ENCODE measurements at regions of chr4 and their contacts with region 1.

Region 1: GRCh38 chr4:16431866-16432265 is 205.6 kb upstream of the TAPT1 start:
- DNase-seq: no peak
- ATAC-seq: no peak
- H3K4me3 ChIP-seq: no peak overlapping the region
- H3K27ac ChIP-seq: no peak overlapping the region
- H3K4me1 ChIP-seq: no peaks in the 10 kb centered on the region
- H3K27me3 ChIP-seq: no peaks in the 10 kb centered on the region
- CTCF ChIP-seq: no peak

Region 2: DNA sequence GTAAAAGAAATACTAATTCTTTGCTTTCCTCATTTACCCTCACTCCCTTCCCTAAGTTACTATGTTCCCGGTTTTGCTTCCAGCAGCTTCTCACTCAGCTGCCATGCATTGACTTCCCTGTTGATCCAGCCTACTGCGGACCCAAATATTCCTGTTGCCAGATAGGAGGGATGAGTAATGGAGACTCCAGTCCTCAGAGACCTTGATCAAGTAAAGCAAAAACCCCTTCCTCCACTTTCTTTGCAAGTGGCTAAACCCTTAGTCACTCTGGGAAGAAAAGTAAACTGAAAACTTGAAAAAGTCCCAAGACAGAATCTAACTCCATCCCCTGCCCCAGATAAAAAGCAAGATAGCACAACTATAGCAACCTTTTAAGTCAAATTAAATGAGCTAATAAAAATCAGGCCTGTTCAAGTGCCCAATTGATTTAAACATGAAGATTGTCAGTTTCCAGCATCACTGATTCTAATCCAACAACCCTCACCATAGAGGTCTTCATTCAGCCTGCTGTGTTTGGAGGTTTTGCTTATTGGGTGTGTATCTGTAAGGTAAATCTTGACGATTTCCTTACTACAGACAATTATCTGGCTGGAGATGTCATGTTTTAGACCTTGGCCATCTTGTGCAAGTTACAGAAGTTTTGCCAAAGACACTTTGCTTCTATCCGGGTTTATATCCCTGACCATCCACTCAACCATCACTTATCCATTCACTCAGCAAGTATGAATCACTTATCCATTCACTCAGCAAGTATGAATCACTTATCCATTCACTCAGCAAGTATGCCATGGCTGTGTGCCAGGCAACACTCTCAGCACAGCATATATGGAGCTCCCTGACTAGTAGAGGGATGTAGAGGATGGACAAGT is 510.9 kb before region 1 on chr4:
- intact Hi-C with region 1: no loop called
- DNase-seq: peak in 1 of 2 donors; percentile 12
- ATAC-seq: peak in 3 of 8 donors; percentile 17 to 90 (median 64)
- H3K4me3 ChIP-seq: no peak overlapping the region
- H3K27ac ChIP-seq: no peak overlapping the region
- H3K4me1 ChIP-seq: no peaks in the 10 kb centered on the region
- H3K27me3 ChIP-seq: peaks cover 0 to 27% (median 15%) of the 10 kb centered on the region in 7 donors
- CTCF ChIP-seq: no peak

Region 3: DNA sequence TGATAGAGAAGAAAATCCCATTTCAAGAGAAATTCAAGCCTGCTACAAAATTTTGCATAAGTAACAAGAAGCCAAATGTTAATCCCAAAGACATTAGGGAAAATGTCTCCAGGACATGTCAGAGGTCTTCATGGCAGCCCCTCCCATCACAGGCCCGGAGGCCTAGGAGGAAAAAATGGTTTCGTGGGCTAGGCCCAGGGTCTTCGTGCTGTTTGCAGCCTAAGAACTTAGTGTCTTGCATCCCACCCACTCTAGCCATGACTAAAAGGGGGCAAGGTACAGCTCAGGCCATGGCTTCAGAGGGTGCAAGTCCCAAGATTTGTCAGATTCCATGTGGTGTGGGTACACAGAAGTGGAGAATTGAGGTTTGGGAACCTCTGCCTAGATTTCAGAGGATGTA is 147.8 kb before region 1 on chr4:
- intact Hi-C with region 1: loop called in 1 of 10 experiments (anchors 2 kb)
- DNase-seq: no peak
- ATAC-seq: no peak
- H3K4me3 ChIP-seq: no peak overlapping the region
- H3K27ac ChIP-seq: no peak overlapping the region
- H3K4me1 ChIP-seq: no peaks in the 10 kb centered on the region
- H3K27me3 ChIP-seq: peaks cover 0 to 30% (median 7%) of the 10 kb centered on the region in 7 donors
- CTCF ChIP-seq: no peak

Region 4: DNA sequence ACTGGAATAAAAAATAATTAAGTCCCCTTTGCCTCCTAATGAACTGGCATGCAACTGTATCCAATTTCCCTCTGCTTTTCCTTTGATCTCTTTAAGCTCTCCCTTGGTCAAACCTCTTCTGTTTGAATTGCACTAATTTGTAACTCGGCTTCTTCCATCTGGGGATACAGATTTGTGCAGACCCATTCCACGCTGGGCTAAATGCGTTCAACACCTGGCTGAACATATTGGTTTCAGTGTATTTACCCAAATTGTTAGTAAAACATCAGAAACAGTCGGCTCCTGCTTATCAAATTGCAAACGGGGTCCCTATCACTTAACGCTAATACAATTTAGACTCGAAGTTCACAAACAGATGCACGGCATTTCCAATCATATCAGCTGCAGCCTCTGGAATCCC is 80.7 kb before region 1 on chr4:
- intact Hi-C with region 1: no loop called
- DNase-seq: no peak
- ATAC-seq: no peak
- H3K4me3 ChIP-seq: no peak overlapping the region
- H3K27ac ChIP-seq: no peak overlapping the region
- H3K4me1 ChIP-seq: no peaks in the 10 kb centered on the region
- H3K27me3 ChIP-seq: peaks cover 0 to 15% (median 0%) of the 10 kb centered on the region in 7 donors
- CTCF ChIP-seq: no peak